ENCODE measurements at regions of chr15 and their contacts with region 1.

Region 1: GRCh38 chr15:52679232-52680040 is at the start of gene ATOSA:
- DNase-seq: peak; percentile 98
- H3K4me3 Mint-ChIP-seq: peak within 1 kb of the TSS; percentile 98
- H3K27ac Mint-ChIP-seq: peak within 1 kb of the TSS; percentile 99
- H3K4me1 Mint-ChIP-seq: peaks cover 31% of the 10 kb centered on the region
- H3K27me3 Mint-ChIP-seq: peaks cover 6% of the 10 kb centered on the region
- total RNA-seq, gene ATOSA: 9.3 and 13.4 TPM in 2 replicates

Region 2: GRCh38 chr15:51971375-51972133 is 707.9 kb before region 1 on chr15 and contains the start of gene LEO1:
- intact Hi-C with region 1: loop called (anchors 5 kb)
- DNase-seq: peak; percentile 97
- H3K4me3 Mint-ChIP-seq: peak within 1 kb of the TSS; percentile 87
- H3K27ac Mint-ChIP-seq: peak within 1 kb of the TSS; percentile 94
- H3K4me1 Mint-ChIP-seq: peaks cover 23% of the 10 kb centered on the region
- H3K27me3 Mint-ChIP-seq: peaks cover 2% of the 10 kb centered on the region
- total RNA-seq, gene LEO1: 35.0 and 35.7 TPM in 2 replicates

Region 3: GRCh38 chr15:52331490-52332240 is 347.8 kb before region 1 on chr15:
- intact Hi-C with region 1: loop called (anchors 5 kb)
- DNase-seq: peak; percentile 90
- H3K4me3 Mint-ChIP-seq: peak overlapping the region; percentile 56
- H3K27ac Mint-ChIP-seq: peak overlapping the region; percentile 49
- H3K4me1 Mint-ChIP-seq: peaks cover 24% of the 10 kb centered on the region
- H3K27me3 Mint-ChIP-seq: no peaks in the 10 kb centered on the region

Region 4: DNA sequence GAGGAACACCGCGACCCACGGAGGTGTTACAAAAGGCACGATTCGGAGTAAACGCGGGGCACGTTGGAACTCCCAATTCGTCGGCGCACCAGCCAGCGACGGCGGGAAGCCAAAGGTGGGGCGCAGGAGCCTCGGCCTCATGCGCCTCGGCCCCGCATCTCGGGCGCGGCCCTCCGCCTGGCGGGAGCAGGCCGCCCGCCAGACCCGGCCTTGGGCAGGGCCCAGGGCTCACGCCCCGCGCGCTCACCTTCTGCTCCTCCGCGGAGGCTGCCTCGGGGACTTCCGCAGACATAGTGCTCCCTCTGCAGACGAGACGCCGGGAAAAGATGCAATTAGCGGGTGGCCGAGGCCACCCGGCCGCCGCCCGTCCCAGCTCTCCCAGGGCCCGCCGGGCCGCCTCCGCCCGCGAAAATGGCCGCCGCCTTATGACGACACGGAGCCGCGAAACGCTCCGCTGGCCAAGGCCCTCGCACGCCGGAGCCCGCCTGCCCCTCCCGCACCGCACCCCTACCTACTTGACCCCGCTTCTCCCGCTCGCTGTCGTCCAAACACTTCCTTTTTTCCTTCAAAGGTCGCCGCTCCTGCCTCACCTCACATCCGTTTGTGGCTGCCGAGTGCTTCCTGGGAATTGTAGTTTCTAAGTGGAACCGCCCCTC is 110.7 kb before region 1 on chr15 and contains the start of gene ARPP19:
- intact Hi-C with region 1: loop called (anchors 1 kb)
- DNase-seq: peak; percentile 94
- H3K4me3 Mint-ChIP-seq: peak within 1 kb of the TSS; percentile 88
- H3K27ac Mint-ChIP-seq: peak within 1 kb of the TSS; percentile 99
- H3K4me1 Mint-ChIP-seq: peaks cover 29% of the 10 kb centered on the region
- H3K27me3 Mint-ChIP-seq: peaks cover 1% of the 10 kb centered on the region
- total RNA-seq, gene ARPP19: 191 and 215 TPM in 2 replicates

Region 5: DNA sequence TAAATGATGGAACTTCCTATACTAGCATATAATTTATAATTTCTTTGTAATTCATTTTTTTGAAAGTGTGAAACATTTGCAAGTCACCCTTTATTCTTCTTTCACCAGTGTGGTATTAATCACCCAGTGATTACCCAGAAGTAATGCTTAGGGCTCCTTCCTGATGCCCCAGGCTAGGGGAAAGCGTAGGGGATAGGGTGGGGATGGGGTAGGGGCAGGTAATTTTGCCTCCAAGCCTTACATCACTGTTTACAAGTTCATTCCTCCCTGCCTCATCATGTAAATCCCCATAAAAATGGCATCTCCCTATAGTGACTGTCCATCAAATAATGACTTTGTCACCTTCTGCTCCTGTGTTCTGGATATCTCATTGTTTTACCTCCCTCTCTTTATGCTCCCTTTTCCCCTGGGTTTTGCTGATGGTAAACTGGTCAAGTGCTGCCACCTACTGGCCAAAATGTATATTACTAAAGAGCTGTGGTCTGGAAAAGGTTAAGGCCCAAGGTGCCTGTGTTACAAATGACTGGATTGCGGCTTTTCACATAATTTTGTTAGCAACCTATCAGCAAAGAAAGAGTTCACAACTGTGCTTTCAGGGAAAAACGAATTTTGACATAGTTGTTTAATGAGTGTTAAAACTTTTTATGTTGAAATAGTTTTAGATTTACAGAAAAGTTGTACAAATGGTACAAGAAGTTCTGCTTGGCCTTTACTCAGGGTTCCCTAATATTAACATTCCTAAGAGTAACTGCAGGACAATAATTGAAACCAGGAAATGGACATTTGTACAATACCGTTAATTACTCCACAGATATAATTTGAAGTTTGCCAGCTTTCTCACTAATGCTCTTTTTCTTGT is 56.0 kb after region 1 on chr15:
- intact Hi-C with region 1: loop called (anchors 2 kb)
- DNase-seq: peak; percentile 94
- H3K4me3 Mint-ChIP-seq: no peak overlapping the region
- H3K27ac Mint-ChIP-seq: peak overlapping the region; percentile 18
- H3K4me1 Mint-ChIP-seq: peaks cover 17% of the 10 kb centered on the region
- H3K27me3 Mint-ChIP-seq: peaks cover 8% of the 10 kb centered on the region

Region 6: GRCh38 chr15:52893338-52893737 is 213.9 kb after region 1 on chr15:
- intact Hi-C with region 1: no loop called
- DNase-seq: no peak
- H3K4me3 Mint-ChIP-seq: no peak overlapping the region
- H3K27ac Mint-ChIP-seq: no peak overlapping the region
- H3K4me1 Mint-ChIP-seq: no peaks in the 10 kb centered on the region
- H3K27me3 Mint-ChIP-seq: peaks cover 8% of the 10 kb centered on the region